ENCODE measurements at regions of chr6 and their contacts with region 1.

Region 1: DNA sequence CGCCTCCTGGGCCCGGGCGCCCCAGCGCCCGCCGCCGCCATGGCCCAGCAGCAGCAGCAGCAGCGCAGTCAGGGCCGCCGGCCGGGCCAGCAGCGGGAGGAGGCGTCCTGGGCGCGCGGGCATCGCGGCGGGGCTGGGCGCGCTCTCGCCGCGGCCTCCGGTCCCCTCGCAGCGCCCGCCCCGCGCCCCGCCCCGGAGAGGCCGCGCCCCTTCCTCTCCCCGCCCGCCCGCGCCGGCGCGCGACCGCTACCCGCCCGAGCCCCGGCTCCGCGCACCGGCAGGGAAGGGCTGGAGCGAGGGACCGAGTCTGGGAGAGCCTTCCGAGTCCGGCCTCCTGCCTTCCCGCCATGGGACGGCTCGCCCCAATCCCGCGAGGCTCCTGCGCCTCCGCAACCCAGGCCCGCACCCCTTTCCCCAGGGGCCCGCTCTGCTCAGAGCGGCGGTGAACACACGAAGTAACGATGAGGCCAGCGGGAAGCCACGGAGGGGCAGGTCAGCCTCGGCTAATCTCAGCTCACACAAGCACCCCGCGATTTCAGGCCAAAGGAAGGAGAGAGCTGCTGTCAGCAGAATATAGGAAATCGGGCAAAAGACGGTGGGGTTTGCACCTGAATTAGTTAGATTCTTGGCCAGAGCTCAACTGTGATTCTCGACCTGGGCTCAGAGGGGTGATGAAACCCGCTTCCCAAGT is at the start of gene TXNDC5:
- DNase-seq: peak in 1 of 2 experiments; percentile 76
- H3K4me3 ChIP-seq: peak within 1 kb of the TSS; percentile 75
- H3K27ac ChIP-seq: peak within 1 kb of the TSS; percentile 41
- H3K4me1 ChIP-seq: peaks cover 14% of the 10 kb centered on the region; the same call in 1 of the 2 replicates
- H3K27me3 ChIP-seq: no peaks in the 10 kb centered on the region
- CTCF ChIP-seq: no peak
- total RNA-seq, gene TXNDC5: 74.8 and 80.5 TPM in 2 replicates

Region 2: DNA sequence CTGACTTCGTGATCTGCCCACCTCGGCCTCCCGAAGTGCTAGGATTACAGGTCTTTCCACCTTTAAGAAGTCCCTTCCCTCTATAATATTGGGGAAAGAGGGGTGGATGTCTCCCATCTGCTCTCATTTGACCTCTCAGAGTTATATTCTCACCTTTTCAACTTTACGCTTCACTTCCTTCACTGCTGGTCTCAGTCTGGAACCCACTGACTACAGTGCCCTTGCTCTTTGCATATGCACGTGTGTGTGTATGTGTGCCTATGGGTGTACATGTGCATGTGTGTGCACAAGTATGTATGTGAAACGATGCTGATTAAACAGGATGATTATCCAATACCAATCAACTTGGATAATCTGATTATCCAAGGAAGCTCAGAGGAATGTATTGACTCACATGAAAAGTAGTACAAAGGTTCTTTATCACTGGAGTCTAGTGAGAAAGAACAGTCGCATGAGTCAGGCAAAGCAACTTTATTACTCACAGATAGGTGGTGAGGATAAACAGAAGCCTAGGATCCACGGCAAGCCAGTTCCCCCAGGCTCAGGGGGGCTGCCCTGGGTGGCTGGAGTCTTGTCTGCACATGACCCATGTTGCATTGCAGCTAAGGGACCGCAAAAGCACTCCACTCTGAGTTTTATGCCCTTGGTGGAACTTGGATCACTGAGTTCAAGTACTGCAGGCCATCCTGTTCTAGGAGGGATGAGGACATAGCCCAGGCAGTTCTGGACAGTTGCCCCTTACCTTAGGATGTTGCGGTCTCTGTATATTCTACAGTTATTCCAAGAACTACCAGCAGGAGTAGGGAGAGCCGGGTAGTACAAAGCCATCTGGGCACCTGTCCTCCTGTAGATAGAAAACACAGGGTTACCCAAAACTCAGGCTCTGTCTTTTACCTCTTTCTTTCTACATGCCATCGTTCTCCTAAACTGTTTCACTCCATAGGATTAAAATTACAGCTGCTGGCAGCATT is 269.9 kb before region 1 on chr6:
- CTCF ChIA-PET with region 1: no interaction called
- POLR2A ChIA-PET with region 1: no interaction called
- intact Hi-C with region 1: no loop called
- DNase-seq: peak; percentile 9 to 79
- H3K4me3 ChIP-seq: no peak overlapping the region
- H3K27ac ChIP-seq: peak overlapping the region; percentile 57
- H3K4me1 ChIP-seq: peaks cover 32% of the 10 kb centered on the region
- H3K27me3 ChIP-seq: no peaks in the 10 kb centered on the region
- CTCF ChIP-seq: no peak

Region 3: DNA sequence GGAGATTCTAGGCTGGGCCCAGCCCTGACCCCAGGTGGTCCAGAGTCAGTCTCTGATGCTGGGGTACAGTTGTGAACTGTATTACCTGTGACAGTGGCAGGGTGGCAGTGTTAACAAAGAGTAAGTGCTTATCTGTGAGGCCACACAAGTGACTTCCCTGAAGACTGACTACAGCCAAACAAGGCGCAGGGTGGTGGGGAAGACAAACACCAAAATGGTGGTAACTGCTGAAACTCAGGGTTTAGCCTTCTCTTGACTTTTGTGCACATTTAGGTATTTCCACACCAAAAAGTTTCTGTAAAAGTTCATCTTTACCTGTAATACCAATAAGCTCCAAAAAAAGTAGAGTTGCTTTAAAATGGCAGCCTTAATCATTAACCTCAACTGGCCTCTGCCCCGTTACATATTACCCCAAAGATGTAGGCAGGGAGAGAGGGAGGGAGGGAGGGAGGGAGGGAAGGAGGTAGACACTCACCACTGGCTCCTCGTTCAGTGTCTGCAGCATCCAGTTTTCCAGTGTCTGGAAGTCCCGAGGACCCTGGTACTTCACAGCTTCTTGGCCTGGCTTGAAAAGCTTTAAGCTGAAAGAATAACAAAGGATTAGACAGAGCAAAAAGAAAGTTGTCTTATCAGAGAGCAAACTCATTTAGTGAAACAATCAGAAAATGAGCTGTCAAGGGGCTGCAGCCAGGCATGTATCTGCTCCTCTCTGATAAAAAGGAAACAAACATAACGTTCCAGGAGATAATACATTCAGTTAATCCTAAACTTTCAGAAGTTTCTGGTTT is 11.5 kb before region 1 on chr6:
- CTCF ChIA-PET with region 1: no interaction called
- POLR2A ChIA-PET with region 1: no interaction called
- intact Hi-C with region 1: loop called (anchors 1 kb)
- DNase-seq: no peak
- H3K4me3 ChIP-seq: no peak overlapping the region
- H3K27ac ChIP-seq: no peak overlapping the region
- H3K4me1 ChIP-seq: no peaks in the 10 kb centered on the region
- H3K27me3 ChIP-seq: no peaks in the 10 kb centered on the region
- CTCF ChIP-seq: 0 out of 2 replicates have a peak, but pooled peaks have one; percentile 25

Region 4: GRCh38 chr6:7974938-7975763 is 64.4 kb after region 1 on chr6:
- CTCF ChIA-PET with region 1: no interaction called
- POLR2A ChIA-PET with region 1: no interaction called
- intact Hi-C with region 1: loop called (anchors 1 kb)
- DNase-seq: peak; percentile 92 to 94
- H3K4me3 ChIP-seq: peak overlapping the region; percentile 32; the same call in 1 of the 2 replicates
- H3K27ac ChIP-seq: no peak overlapping the region
- H3K4me1 ChIP-seq: peaks cover 32% of the 10 kb centered on the region
- H3K27me3 ChIP-seq: no peaks in the 10 kb centered on the region
- CTCF ChIP-seq: no peak

Region 5: GRCh38 chr6:7992002-7992815 is 81.4 kb after region 1 on chr6:
- CTCF ChIA-PET with region 1: no interaction called
- POLR2A ChIA-PET with region 1: no interaction called
- intact Hi-C with region 1: loop called (anchors 5 kb)
- DNase-seq: peak in 1 of 2 experiments; percentile 51
- H3K4me3 ChIP-seq: no peak overlapping the region
- H3K27ac ChIP-seq: no peak overlapping the region
- H3K4me1 ChIP-seq: no peaks in the 10 kb centered on the region
- H3K27me3 ChIP-seq: no peaks in the 10 kb centered on the region
- CTCF ChIP-seq: peak; percentile 63

Measured in PC-9 (cell line).